ENCODE measurements at regions of chr10 and their contacts with region 1.

Region 1: GRCh38 chr10:96017191-96017687 is 26.1 kb upstream of the CCNJ start:
- DNase-seq: peak; percentile 77
- H3K4me3 ChIP-seq: no peak overlapping the region
- H3K27ac ChIP-seq: no peak overlapping the region
- H3K4me1 ChIP-seq: no peaks in the 10 kb centered on the region
- CTCF ChIP-seq: peak; percentile 97

Region 2: GRCh38 chr10:96129387-96130325 is 112.4 kb after region 1 on chr10 and contains the start of gene ZNF518A:
- CTCF ChIA-PET with region 1: no interaction called
- POLR2A ChIA-PET with region 1: no interaction called
- intact Hi-C with region 1: loop called (anchors 5 kb)
- DNase-seq: peak; percentile 99
- H3K4me3 ChIP-seq: peak within 1 kb of the TSS; percentile 73
- H3K27ac ChIP-seq: peak within 1 kb of the TSS; percentile 92
- H3K4me1 ChIP-seq: peaks cover 34% of the 10 kb centered on the region
- CTCF ChIP-seq: no peak
- total RNA-seq, gene ZNF518A: 19.0 and 19.4 TPM in 2 replicates

Region 3: DNA sequence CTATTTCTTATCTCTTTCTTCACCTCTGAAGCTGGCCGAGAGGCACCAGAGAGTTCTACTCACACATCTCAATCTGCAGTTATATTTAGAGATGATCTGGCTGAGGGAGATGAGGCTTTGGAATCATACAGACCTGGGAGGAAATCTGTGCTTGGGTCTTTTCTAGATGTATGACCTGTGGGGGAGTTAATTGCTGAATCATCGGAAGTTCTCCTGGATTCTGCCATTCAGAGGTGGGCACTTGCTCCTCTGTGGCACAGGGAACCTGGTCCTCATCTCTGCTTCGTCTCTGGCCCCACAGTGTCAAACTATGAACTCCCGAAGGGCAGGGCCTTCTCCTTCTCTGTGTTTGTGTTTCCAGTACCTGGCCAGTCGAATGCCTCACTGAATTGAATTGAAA is 201.6 kb after region 1 on chr10:
- CTCF ChIA-PET with region 1: no interaction called
- POLR2A ChIA-PET with region 1: no interaction called
- intact Hi-C with region 1: loop called (anchors 5 kb)
- DNase-seq: no peak
- H3K4me3 ChIP-seq: no peak overlapping the region
- H3K27ac ChIP-seq: no peak overlapping the region
- H3K4me1 ChIP-seq: peaks cover 17% of the 10 kb centered on the region
- CTCF ChIP-seq: no peak

Region 4: GRCh38 chr10:96333101-96333500 is 315.9 kb after region 1 on chr10:
- CTCF ChIA-PET with region 1: no interaction called
- POLR2A ChIA-PET with region 1: interaction called, 3 read pairs
- intact Hi-C with region 1: loop called (anchors 2 kb)
- DNase-seq: peak; percentile 14
- H3K4me3 ChIP-seq: no peak overlapping the region
- H3K27ac ChIP-seq: no peak overlapping the region
- H3K4me1 ChIP-seq: peaks cover 13% of the 10 kb centered on the region
- CTCF ChIP-seq: no peak

Region 5: DNA sequence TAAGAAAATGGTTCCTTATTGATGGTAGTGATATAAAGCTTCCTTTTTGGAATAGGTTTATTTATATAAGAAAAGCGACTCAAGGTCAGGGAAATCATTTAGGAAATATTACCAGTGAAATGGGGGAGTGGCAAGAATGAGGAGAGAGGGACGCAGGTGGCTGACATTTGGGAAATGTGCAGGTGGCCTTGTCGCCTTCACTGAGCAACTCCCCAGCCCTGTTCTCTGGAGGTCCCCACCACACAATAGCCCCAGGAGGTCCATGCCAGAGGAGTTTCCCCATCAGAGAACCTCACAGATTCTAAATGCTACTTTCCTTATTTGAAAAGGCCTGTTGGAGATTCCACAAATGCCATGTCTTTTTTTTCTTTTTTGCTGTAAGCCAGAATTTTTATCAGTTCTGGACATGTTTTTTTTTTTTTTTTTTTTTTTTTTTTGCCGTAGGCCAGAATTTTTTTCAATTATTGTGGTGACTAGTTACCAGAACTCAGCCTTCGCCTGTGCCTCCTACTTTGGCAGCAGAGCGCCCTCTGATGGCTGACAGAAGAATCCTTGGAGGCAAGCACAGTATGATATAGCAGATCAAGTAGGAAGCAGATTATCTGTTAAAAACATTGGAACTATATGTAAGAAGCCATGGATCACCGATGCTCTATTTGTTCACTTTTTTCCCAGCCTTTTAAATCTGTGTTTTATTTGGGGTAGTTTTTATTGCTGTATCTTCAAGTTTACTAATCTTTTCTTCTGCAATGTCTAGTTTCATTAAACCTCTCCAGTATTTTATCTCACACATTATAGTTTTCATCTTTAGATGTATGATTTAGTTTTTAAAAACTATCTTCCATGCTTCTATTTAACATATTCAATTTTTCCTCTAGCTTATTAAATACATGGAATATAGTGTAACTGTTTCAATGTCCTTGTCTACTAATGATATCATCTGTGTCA is 323.0 kb after region 1 on chr10:
- CTCF ChIA-PET with region 1: interaction called, 4 read pairs
- POLR2A ChIA-PET with region 1: interaction called, 3 read pairs
- intact Hi-C with region 1: loop called (anchors 1 kb)
- DNase-seq: peak; percentile 88
- H3K4me3 ChIP-seq: no peak overlapping the region
- H3K27ac ChIP-seq: no peak overlapping the region
- H3K4me1 ChIP-seq: peaks cover 13% of the 10 kb centered on the region
- CTCF ChIP-seq: peak; percentile 99

Measured in OCI-LY7 (cell line).